ENCODE measurements at regions of chr6 and their contacts with region 1.

Region 1: GRCh38 chr6:135801755-135802465 is 49.6 kb upstream of the PDE7B start:
- DNase-seq: no peak
- H3K4me3 ChIP-seq: no peak overlapping the region
- H3K27ac ChIP-seq: no peak overlapping the region
- H3K4me1 ChIP-seq: no peaks in the 10 kb centered on the region
- H3K27me3 ChIP-seq: no peaks in the 10 kb centered on the region
- CTCF ChIP-seq: no peak
- POLR2A ChIP-seq: no peak

Region 2: GRCh38 chr6:135731116-135731515 is 70.8 kb before region 1 on chr6:
- intact Hi-C with region 1: loop called (anchors 5 kb)
- DNase-seq: no peak
- H3K4me3 ChIP-seq: no peak overlapping the region
- H3K27ac ChIP-seq: no peak overlapping the region
- H3K4me1 ChIP-seq: no peaks in the 10 kb centered on the region
- H3K27me3 ChIP-seq: no peaks in the 10 kb centered on the region
- CTCF ChIP-seq: no peak
- POLR2A ChIP-seq: no peak

Measured in breast epithelium (tissue), 4 donors.